K562 (cell line): ENCODE measurements at regions of chr9 and their contacts with region 1.

Region 1: DNA sequence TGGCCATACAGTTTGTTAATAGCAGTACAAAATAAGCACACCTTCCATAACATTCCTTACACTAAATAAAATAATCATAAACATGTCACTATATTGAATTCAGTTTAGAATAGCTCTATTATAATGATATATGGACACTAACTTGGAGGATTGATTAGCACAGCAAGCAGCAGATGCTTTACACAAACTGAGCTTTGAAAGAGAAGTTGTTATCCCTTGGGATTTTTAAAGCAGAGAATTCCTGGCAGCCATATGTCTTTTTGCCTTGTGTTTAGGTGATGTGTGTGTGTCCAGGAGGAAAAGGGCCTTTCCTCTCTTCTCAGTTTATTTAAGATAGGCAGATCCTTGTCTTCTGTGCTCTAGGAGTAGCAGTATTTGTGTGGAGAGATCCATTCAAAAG is 232.2 kb upstream of the GRIN3A start:
- DNase-seq: no peak
- ATAC-seq: no peak
- H3K4me3 ChIP-seq: no peak overlapping the region
- H3K27ac ChIP-seq: no peak overlapping the region
- H3K4me1 ChIP-seq: no peaks in the 10 kb centered on the region
- H3K27me3 ChIP-seq: no peaks in the 10 kb centered on the region
- CTCF ChIP-seq: no peak
- EP300 ChIP-seq: no peak
- POLR2A ChIP-seq: no peak
- RAD21 ChIP-seq: no peak

Region 2: DNA sequence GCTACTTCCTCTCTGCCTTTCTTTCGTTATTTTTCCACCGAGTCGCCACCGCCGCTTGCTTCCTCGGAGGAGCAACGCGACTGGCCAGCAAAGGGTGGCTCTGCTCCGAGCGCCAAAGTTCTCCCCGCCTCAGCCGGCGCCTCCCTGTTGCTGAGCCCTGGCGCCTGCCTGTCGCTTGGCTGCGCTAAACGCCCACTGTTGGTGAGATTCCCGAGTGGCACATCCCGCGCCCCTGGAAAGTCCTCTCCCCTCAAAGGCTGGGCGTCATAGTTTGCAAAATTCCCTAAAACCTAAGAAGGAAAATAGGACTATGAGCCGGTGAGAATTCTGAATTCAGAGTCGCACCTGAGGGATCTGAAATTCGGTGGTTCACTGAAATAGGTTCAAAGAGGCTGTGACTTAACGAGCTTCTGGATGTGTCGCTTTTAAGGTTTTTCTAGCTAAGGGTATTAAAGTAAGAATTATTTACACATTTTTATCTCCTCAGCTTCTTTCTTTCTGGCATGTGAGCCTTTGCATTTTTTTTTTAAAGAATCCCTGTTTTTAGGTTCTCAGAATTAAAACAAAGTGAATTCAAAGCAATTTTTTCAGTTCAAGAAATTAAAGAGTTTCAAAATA is 231.9 kb before region 1 on chr9 and contains the start of gene GRIN3A:
- CTCF ChIA-PET with region 1: no interaction called
- POLR2A ChIA-PET with region 1: no interaction called
- in situ Hi-C with region 1: no loop called
- intact Hi-C with region 1: no loop called
- DNase-seq: peak in 3 of 4 experiments; percentile 7 to 13 (median 10)
- ATAC-seq: peak; percentile 78
- H3K4me3 ChIP-seq: no peak within 1 kb of the TSS
- H3K27ac ChIP-seq: no peak within 1 kb of the TSS
- H3K4me1 ChIP-seq: peaks cover 0 to 13% of the 10 kb centered on the region in 2 experiments; a peak in 2 of 5 replicates
- H3K27me3 ChIP-seq: peaks cover 2 to 23% of the 10 kb centered on the region in 2 experiments; a peak in 2 of 5 replicates
- CTCF ChIP-seq: peak; percentile 31 to 43 (median 35); a peak in 5 of 6 replicates
- EP300 ChIP-seq: no peak
- POLR2A ChIP-seq: no peak
- RAD21 ChIP-seq: peak in 1 of 2 experiments; percentile 33; a peak in 2 of 4 replicates
- polyA plus RNA-seq, gene GRIN3A: 0.01 to 0.03 TPM

Region 3: DNA sequence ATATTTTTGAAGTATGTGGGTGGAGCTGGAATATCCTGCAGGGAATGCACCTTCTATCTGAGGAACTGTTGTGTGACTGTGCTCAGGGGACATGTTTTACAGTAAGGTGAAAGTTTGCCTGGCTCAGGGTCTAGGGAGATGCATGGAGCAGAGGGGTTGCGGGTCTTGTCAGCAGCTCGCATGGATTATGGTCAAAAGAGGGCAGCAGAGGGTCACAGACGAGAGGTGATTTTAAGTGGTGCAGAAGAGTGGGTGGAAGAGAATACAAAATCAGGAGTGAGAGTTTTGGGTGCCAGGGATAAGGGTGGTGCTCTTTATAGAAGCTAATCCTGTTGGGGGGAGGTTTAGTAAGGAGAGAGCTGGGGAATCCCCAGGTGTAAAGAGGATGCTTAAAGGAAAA is 178.7 kb before region 1 on chr9:
- CTCF ChIA-PET with region 1: no interaction called
- POLR2A ChIA-PET with region 1: no interaction called
- in situ Hi-C with region 1: no loop called
- intact Hi-C with region 1: loop called (anchors 5 kb)
- DNase-seq: peak; percentile 12 to 71 (median 33)
- ATAC-seq: peak; percentile 98
- H3K4me3 ChIP-seq: no peak overlapping the region
- H3K27ac ChIP-seq: no peak overlapping the region
- H3K4me1 ChIP-seq: no peaks in the 10 kb centered on the region
- H3K27me3 ChIP-seq: no peaks in the 10 kb centered on the region
- CTCF ChIP-seq: peak; percentile 55 to 76 (median 71)
- EP300 ChIP-seq: no peak
- POLR2A ChIP-seq: no peak
- RAD21 ChIP-seq: peak; percentile 72 to 85